Heart right ventricle (tissue), 16 donors: ENCODE measurements at regions of chr12 and their contacts with region 1.

Region 1: GRCh38 chr12:106113042-106113441 is 25.7 kb downstream of the NUAK1 start:
- DNase-seq: no peak
- ATAC-seq: peak in 2 of 8 donors; percentile 0 to 6
- H3K4me3 ChIP-seq: no peak overlapping the region
- H3K27ac ChIP-seq: peak overlapping the region; percentile 63 to 100 (median 82)
- H3K4me1 ChIP-seq: peaks cover 40 to 100% (median 96%) of the 10 kb centered on the region in 9 donors
- H3K27me3 ChIP-seq: no peaks in the 10 kb centered on the region
- CTCF ChIP-seq: no peak

Region 2: GRCh38 chr12:106078358-106079010 is 34.6 kb before region 1 on chr12:
- intact Hi-C with region 1: loop called in 1 of 10 experiments (anchors 5 kb)
- DNase-seq: peak; percentile 69 to 74
- ATAC-seq: peak; percentile 57 to 86 (median 78)
- H3K4me3 ChIP-seq: no peak overlapping the region
- H3K27ac ChIP-seq: peak overlapping the region in 7 of 10 donors; percentile 30 to 87 (median 85)
- H3K4me1 ChIP-seq: peaks cover 16 to 91% (median 67%) of the 10 kb centered on the region in 9 donors
- H3K27me3 ChIP-seq: no peaks in the 10 kb centered on the region
- CTCF ChIP-seq: no peak